Posterior cingulate gyrus (tissue), 11 donors: ENCODE measurements at regions of chr10 and their contacts with region 1.

Region 1: GRCh38 chr10:103598654-103599115 is 105.2 kb downstream of the NEURL1 start:
- DNase-seq: peak in 9 of 10 donors; percentile 59 to 96 (median 78)

Region 2: GRCh38 chr10:103685880-103686669 is 87.4 kb after region 1 on chr10:
- intact Hi-C with region 1: loop called (anchors 2 kb)
- DNase-seq: peak; percentile 70 to 98 (median 87)

Region 3: GRCh38 chr10:103859161-103860086 is 260.7 kb after region 1 on chr10:
- intact Hi-C with region 1: loop called (anchors 5 kb)
- DNase-seq: peak in 5 of 10 donors; percentile 63 to 87 (median 72)